Activated B cell treated with CpG ODN at 0.5 μM for 24 hours (primary cell): ENCODE measurements at regions of chr12 and their contacts with region 1.

Region 1: DNA sequence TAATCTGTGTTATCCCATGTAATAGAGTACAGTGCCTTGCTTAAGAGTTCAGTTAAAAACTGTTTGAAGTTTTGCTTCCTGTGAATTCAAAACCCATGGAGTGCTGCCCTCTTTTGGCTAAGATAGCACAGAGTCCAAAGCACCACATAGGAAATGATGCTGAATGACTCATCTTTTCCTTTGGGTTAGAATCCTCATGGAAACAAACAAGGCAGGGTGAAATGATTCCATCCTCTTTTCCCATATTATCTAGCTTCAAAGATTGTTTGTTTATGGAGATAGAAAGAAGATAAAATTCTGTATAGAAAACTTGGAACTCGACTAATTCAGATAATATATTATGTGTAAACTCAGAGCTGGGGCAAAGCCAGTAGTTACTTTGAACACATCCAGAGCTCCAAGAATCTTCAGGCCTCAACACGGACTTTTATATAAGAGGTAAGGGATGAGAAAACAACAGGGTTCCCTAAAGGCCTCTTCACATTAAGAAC is 87.4 kb downstream of the OTOGL start:
- DNase-seq: no peak
- ATAC-seq: no peak
- H3K4me3 Mint-ChIP-seq: no peak overlapping the region
- H3K27ac Mint-ChIP-seq: no peak overlapping the region
- H3K4me1 Mint-ChIP-seq: no peaks in the 10 kb centered on the region
- H3K27me3 Mint-ChIP-seq: peaks cover 2% of the 10 kb centered on the region
- CTCF ChIP-seq: no peak

Region 2: GRCh38 chr12:79407671-79408622 is 778.8 kb before region 1 on chr12:
- CTCF ChIA-PET with region 1: no interaction called
- POLR2A ChIA-PET with region 1: no interaction called
- intact Hi-C with region 1: loop called (anchors 2 kb)
- DNase-seq: no peak
- ATAC-seq: peak; percentile 66
- H3K4me3 Mint-ChIP-seq: no peak overlapping the region
- H3K27ac Mint-ChIP-seq: no peak overlapping the region
- H3K4me1 Mint-ChIP-seq: no peaks in the 10 kb centered on the region
- H3K27me3 Mint-ChIP-seq: no peaks in the 10 kb centered on the region
- CTCF ChIP-seq: no peak

Region 3: DNA sequence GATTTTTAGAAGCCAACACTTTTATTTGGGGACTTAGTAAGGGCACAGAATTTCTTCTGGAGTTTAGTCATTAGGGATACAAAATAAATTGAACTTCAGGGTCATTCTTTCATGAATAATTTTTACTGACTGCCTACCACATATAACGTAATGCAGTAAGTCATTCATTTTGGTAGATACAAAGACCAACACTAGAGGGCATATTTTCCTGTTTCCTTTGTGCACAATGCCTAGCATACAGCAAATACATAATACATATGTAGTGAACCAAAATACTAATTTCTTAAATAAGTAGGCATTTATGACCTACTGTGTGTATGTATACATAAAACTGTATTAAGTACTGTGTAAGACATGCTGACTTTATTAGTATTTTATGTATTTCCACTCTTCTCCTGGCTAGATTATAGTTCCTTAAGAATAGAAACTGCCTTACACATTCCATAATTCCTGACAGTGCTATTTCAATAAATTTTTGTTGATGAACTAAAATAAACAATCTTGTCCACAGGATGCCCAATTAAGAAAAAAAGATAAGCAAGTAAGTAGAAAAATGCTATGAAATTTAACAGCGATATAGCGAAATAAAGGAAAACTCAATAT is 299.8 kb before region 1 on chr12:
- CTCF ChIA-PET with region 1: no interaction called
- POLR2A ChIA-PET with region 1: no interaction called
- intact Hi-C with region 1: loop called (anchors 1 kb)
- DNase-seq: no peak
- ATAC-seq: peak; percentile 57
- H3K4me3 Mint-ChIP-seq: no peak overlapping the region
- H3K27ac Mint-ChIP-seq: no peak overlapping the region
- H3K4me1 Mint-ChIP-seq: peaks cover 73% of the 10 kb centered on the region
- H3K27me3 Mint-ChIP-seq: no peaks in the 10 kb centered on the region
- CTCF ChIP-seq: no peak